ENCODE measurements at regions of chr17 and their contacts with region 1.

Region 1: DNA sequence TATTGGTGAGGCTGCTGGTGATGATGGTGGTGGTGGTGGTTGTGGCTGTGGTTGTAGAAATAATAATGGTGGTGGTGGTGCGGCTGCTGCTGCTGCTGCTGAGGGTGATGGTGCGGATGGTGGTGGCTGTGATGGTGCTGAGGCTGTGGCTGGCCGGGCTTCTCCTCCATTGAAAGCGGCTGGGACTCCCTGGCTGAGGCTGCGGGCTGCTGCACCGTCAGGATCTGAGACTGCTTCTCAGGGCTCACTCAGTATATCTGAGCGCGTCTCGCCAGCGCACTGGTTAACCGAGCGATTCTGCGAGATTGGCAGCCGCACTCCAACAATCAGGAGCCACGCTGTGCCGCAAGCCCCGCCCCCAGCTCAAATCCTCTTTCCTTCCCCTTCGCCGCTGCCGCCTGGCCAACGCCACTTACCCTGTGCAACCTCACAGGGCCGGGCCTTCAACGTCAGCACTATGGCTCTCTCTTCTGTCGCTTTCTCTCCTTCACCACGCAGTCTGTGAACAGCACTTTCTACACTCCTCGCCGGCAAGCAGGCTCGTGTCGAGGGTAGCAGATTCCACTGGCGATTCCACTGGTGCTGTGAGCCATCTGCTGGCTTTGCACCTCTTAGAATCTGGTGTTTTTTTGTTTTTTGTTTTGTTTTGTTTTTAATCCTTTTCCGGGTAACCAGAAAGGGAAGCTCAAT is at the start of gene NUFIP2:
- DNase-seq: peak; percentile 96
- ATAC-seq: peak; percentile 92
- H3K4me3 ChIP-seq: peak within 1 kb of the TSS; percentile 97
- H3K27ac ChIP-seq: peak within 1 kb of the TSS; percentile 97
- H3K4me1 ChIP-seq: peaks cover 11 to 19% of the 10 kb centered on the region in 2 experiments; a peak in 3 of 4 replicates
- H3K27me3 ChIP-seq: no peaks in the 10 kb centered on the region
- CTCF ChIP-seq: no peak
- POLR2A ChIP-seq: peak; percentile 99
- RAD21 ChIP-seq: no peak
- total RNA-seq, gene NUFIP2: 66.5 TPM

Region 2: DNA sequence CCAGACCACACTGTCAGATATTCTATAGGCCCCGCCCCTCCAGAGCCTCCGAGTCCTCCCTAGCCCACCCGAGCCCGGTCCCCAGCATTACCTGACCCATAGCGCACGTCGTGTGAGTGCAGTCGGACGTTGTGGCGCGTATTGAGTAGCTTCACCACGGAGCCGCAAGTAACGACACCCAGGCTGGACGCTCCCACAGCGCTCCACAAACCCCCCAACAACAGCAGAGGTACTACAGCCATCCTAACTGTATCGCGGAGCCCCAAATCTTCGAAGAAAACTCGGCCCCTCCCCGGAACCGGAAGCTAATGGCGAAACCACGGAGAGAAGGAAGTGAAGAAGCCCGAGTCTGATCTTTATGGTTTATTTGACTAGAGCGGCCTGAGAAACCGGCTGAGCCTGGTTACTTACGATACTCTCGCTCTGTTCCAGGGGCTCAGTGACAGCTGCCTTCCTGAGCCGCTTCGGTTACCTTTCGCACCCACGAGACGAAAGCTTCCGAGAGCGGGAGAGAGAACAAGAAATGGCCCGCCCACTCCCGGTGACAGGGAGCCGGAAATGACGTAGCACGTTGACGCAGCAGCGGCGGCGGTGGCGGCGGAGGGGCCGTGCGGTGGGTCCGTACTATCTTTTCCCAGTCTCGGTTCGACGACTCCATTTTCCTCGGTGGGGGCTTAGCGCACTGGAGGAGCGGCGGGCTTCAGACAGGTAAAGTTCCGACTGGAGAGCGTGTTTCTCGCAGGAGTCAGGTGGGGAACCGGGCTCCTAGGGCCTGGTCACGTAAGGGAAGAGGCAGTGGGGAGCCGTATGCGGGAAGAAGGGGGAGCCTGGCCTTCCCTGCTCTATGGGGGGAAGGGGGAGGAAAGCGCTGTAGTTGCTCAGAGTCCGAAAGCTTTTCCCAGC is 632.1 kb before region 1 on chr17 and contains the starts of genes SDF2 and SUPT6H:
- CTCF ChIA-PET with region 1: no interaction called
- POLR2A ChIA-PET with region 1: no interaction called
- RAD21 ChIA-PET with region 1: no interaction called
- intact Hi-C with region 1: no loop called
- DNase-seq: peak; percentile 74
- ATAC-seq: peak; percentile 90
- H3K4me3 ChIP-seq: peak within 1 kb of the TSS; percentile 92 to 98
- H3K27ac ChIP-seq: peak within 1 kb of the TSS; percentile 92
- H3K4me1 ChIP-seq: peaks cover 12 to 18% of the 10 kb centered on the region in 2 experiments; a peak in 3 of 4 replicates
- H3K27me3 ChIP-seq: no peaks in the 10 kb centered on the region
- CTCF ChIP-seq: no peak
- POLR2A ChIP-seq: peak; percentile 55
- RAD21 ChIP-seq: no peak
- total RNA-seq, gene SDF2: 41.3 TPM
- total RNA-seq, gene SUPT6H: 62.1 TPM

Region 3: GRCh38 chr17:29283271-29283895 is 10.7 kb before region 1 on chr17:
- CTCF ChIA-PET with region 1: interaction called, 11 read pairs
- POLR2A ChIA-PET with region 1: interaction called, 5 read pairs
- RAD21 ChIA-PET with region 1: interaction called in 1 of 2 experiments, 3 read pairs
- intact Hi-C with region 1: no loop called
- DNase-seq: no peak
- ATAC-seq: peak; percentile 57
- H3K4me3 ChIP-seq: no peak overlapping the region
- H3K27ac ChIP-seq: no peak overlapping the region
- H3K4me1 ChIP-seq: no peaks in the 10 kb centered on the region
- H3K27me3 ChIP-seq: no peaks in the 10 kb centered on the region
- CTCF ChIP-seq: no peak; a peak in 1 of 6 replicates
- POLR2A ChIP-seq: no peak
- RAD21 ChIP-seq: no peak

Region 4: GRCh38 chr17:29469276-29469675 is 175.2 kb after region 1 on chr17:
- CTCF ChIA-PET with region 1: no interaction called
- POLR2A ChIA-PET with region 1: no interaction called
- RAD21 ChIA-PET with region 1: no interaction called
- intact Hi-C with region 1: no loop called
- DNase-seq: no peak
- ATAC-seq: no peak
- H3K4me3 ChIP-seq: no peak overlapping the region
- H3K27ac ChIP-seq: no peak overlapping the region
- H3K4me1 ChIP-seq: no peaks in the 10 kb centered on the region
- H3K27me3 ChIP-seq: no peaks in the 10 kb centered on the region
- CTCF ChIP-seq: no peak
- POLR2A ChIP-seq: no peak
- RAD21 ChIP-seq: no peak

Measured in HCT116 (cell line).